PC-3 (cell line): ENCODE measurements at regions of chr11 and their contacts with region 1.

Region 1: GRCh38 chr11:8688414-8689362 is 6.1 kb downstream of the RPL27A start:
- DNase-seq: peak; percentile 97
- ATAC-seq: peak; percentile 88
- H3K4me3 ChIP-seq: peak overlapping the region; percentile 77
- H3K27ac ChIP-seq: peak overlapping the region; percentile 75
- H3K4me1 ChIP-seq: peaks cover 52% of the 10 kb centered on the region
- H3K27me3 ChIP-seq: no peaks in the 10 kb centered on the region
- CTCF ChIP-seq: peak; percentile 42; the same call in 1 of the 2 replicates

Region 2: DNA sequence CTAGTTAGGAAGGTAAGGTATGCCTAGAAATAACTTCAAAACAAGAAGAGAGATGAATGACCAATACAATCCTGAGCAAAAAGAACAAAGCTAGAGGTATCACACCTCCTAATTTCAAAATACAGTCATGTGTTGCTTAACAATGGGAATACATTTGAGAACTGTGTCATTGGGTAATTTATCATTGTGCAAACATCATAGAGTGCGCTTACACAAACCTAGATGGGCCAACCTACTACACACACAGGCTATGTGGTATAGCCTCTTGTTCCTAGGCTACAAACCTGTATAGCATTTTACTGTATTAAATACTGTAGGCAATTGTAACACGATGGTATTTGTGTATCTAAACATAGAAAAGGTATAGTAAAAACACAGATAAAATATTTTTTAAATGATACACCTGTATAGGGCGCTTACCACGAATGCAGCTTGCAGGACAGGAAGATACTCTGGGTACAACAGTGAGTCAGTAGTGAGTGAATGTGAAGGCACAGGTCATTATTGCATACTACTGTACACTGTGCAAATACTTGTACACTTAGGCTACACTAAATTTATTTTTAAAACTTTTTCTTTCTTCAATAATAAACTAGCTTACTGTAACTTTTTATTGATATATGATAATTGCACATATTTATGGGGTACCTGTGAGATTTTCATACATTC is 142.9 kb before region 1 on chr11:
- CTCF ChIA-PET with region 1: no interaction called
- POLR2A ChIA-PET with region 1: no interaction called
- intact Hi-C with region 1: no loop called
- DNase-seq: no peak
- ATAC-seq: no peak
- H3K4me3 ChIP-seq: no peak overlapping the region
- H3K27ac ChIP-seq: no peak overlapping the region
- H3K4me1 ChIP-seq: no peaks in the 10 kb centered on the region
- H3K27me3 ChIP-seq: peaks cover 42% of the 10 kb centered on the region
- CTCF ChIP-seq: no peak

Region 3: DNA sequence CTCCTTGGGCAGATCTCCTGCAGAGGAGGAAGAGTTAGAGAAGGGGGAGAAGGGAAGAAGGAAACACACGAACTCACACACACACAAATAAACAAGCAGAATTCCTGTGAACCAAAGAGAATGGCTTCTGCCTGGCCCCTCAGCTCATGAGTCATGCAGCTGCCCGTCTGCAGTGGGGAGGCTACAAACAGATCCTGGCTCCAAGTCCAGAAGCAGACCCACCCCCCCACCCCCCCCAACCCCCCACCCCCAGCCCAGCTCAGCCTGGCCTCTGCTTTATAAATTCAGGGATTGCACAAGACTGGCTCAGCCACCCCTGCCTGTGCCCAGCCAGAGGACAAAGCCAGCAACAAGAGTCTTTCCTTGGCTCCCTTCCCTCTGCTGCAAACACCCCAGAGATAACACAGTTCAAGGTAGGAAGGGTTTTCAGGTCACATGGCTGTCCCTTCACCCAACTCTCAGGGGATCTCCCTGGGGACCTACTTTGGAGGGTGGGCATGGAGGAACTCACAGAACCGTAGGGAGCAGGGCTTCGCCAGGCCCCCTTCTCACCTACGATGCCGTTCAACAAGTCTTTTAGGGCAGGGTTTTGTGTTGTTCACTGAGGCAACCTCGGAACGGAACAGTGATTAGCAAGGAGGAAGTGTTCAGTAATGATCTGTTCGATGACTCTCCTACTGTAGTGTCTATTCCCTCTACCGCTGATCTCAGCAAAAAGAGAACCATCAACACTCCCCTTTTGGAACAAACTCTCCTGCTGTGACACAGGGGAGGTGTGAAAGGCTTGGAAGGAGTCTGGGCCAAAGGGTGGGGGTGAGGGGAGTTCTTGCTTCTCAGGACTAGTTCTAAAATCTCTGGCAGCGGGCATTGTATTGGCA is 29.4 kb after region 1 on chr11:
- CTCF ChIA-PET with region 1: no interaction called
- POLR2A ChIA-PET with region 1: no interaction called
- intact Hi-C with region 1: loop called (anchors 2 kb)
- DNase-seq: peak; percentile 73
- ATAC-seq: peak; percentile 15
- H3K4me3 ChIP-seq: peak overlapping the region; percentile 50
- H3K27ac ChIP-seq: peak overlapping the region; percentile 98
- H3K4me1 ChIP-seq: peaks cover 62% of the 10 kb centered on the region
- H3K27me3 ChIP-seq: no peaks in the 10 kb centered on the region
- CTCF ChIP-seq: no peak

Region 4: DNA sequence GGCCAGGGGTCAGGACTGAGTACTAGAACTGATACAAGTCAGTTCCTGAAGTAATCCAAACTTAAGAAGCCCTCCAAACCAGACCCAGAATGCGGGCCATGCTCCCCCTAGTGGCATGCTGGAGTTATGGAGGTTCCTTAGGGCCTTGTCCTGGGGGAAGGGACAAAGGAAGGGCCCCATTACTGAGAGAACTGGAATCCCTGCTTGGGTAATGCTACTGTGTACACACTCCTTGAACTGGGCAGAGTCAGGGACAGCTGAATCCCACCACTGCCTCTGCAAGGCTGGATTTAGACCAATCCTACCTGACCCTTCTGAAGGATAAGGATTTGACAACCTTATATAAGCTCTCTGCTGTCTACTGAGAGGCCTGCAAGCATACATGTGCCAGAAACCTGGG is 125.0 kb after region 1 on chr11:
- CTCF ChIA-PET with region 1: no interaction called
- POLR2A ChIA-PET with region 1: interaction called, 10 read pairs
- intact Hi-C with region 1: loop called (anchors 2 kb)
- DNase-seq: peak; percentile 79
- ATAC-seq: peak; percentile 58
- H3K4me3 ChIP-seq: no peak overlapping the region
- H3K27ac ChIP-seq: peak overlapping the region; percentile 53
- H3K4me1 ChIP-seq: peaks cover 30% of the 10 kb centered on the region
- H3K27me3 ChIP-seq: no peaks in the 10 kb centered on the region
- CTCF ChIP-seq: peak; percentile 88

Region 5: DNA sequence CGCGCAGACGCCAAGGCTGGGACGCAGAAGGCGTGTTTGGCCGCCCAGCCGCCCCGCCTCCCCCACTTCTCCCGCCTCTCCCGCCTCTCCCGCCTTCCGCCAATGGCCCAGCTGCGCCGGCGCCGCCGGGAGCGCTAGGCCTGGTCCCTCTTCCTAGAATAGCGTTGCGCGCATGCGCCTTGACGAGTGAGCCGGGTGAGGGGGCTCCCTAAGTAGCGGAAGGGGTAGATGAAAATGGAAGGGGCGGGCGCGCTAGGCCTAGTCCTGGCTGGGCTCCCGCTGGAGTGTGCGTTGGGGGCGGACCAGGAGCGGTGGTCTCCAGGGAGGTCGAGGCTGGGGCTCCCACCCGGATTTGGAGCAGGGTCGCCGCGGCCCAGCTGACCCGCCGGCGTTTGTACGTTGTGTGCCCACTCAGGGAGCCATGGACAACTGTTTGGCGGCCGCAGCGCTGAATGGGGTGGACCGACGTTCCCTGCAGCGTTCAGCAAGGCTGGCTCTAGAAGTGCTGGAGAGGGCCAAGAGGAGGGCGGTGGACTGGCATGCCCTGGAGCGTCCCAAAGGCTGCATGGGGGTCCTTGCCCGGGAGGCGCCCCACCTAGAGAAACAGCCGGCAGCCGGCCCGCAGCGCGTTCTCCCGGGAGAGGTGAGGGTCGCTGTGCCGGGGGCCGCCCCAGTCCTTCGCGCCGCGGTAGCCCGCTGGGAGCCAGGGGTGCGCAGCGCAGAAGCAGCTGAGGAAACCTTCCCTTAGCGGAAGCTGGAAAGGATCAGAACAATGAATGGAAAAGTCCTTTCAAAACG is 222.5 kb after region 1 on chr11 and contains the start of gene AKIP1:
- CTCF ChIA-PET with region 1: interaction called, 4 read pairs
- POLR2A ChIA-PET with region 1: no interaction called
- intact Hi-C with region 1: loop called (anchors 2 kb)
- DNase-seq: peak; percentile 91
- ATAC-seq: peak; percentile 83
- H3K4me3 ChIP-seq: peak within 1 kb of the TSS; percentile 99
- H3K27ac ChIP-seq: no peak within 1 kb of the TSS
- H3K4me1 ChIP-seq: peaks cover 23% of the 10 kb centered on the region
- H3K27me3 ChIP-seq: no peaks in the 10 kb centered on the region
- CTCF ChIP-seq: no peak
- total RNA-seq, gene AKIP1: 25.3 and 29.5 TPM in 2 replicates

Region 6: DNA sequence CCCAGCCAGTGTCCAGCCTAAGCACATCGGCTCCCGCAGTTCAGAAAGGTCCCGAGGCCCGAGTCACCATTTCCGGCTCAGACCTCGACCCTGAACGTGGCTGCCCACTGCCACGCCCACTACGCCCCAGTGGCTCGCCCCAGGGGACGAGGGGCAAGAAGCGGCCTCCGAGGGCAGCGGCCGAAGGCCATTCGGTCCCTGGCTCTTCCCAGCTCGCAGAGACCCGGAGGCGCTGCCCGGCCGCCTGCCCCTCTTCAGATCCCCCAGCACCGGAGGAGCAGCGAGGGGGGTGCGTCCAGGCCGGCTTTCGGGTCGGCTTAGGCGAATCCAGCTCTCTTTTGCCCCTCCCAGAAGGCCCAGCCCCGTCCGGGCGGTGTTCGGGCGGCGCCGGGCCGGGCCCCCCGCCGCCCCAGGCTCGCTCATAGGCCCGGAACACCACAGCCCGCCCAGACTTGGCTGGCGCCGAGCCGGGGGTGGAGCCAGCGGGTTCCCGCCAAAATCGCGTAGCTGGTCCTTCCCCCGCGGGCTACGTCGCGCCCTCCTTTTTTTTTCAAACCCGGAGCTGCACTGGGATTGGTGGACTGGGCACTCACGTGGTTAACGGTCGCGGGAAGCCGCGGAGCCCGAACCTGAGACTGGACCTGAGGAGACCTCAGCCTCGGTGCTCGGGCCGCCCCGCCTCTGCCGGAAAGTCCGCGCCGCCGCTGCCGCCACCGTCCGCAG is 884.5 kb after region 1 on chr11 and contains the start of gene WEE1:
- CTCF ChIA-PET with region 1: no interaction called
- POLR2A ChIA-PET with region 1: no interaction called
- intact Hi-C with region 1: loop called (anchors 10 kb)
- DNase-seq: peak; percentile 98
- ATAC-seq: peak; percentile 80
- H3K4me3 ChIP-seq: peak within 1 kb of the TSS; percentile 84
- H3K27ac ChIP-seq: peak within 1 kb of the TSS; percentile 90
- H3K4me1 ChIP-seq: peaks cover 48% of the 10 kb centered on the region
- H3K27me3 ChIP-seq: no peaks in the 10 kb centered on the region
- CTCF ChIP-seq: no peak
- total RNA-seq, gene WEE1: 45.1 and 46.9 TPM in 2 replicates